GM10248 (cell line): ENCODE measurements at regions of chr12 and their contacts with region 1.

Region 1: DNA sequence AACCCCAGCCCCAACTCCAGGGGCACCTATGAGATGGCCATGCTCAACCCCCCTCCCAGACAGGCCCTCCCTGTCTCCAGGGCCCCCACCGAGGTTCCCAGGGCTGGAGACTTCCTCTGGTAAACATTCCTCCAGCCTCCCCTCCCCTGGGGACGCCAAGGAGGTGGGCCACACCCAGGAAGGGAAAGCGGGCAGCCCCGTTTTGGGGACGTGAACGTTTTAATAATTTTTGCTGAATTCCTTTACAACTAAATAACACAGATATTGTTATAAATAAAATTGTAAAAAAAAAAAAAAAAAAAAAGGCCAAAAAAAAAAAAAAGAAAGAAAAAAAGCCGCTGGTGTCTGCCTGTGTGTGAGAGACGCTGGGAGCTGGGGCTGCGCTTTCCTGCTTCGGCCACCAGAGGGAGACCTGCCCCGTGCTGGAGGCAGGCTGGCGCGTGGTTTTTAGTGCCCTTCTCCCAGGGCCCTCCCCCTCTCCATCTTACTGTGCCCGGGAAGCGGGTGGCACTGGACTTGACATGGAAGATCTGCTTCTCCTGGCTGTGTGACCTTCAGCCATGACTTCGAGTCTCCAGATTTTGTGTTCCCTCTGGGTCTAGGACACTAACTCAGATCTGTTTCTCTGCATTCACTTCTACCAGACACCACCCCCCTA is 3.4 kb upstream of the NXPH4 start:
- DNase-seq: peak; percentile 89
- CTCF ChIP-seq: peak; percentile 97

Region 2: DNA sequence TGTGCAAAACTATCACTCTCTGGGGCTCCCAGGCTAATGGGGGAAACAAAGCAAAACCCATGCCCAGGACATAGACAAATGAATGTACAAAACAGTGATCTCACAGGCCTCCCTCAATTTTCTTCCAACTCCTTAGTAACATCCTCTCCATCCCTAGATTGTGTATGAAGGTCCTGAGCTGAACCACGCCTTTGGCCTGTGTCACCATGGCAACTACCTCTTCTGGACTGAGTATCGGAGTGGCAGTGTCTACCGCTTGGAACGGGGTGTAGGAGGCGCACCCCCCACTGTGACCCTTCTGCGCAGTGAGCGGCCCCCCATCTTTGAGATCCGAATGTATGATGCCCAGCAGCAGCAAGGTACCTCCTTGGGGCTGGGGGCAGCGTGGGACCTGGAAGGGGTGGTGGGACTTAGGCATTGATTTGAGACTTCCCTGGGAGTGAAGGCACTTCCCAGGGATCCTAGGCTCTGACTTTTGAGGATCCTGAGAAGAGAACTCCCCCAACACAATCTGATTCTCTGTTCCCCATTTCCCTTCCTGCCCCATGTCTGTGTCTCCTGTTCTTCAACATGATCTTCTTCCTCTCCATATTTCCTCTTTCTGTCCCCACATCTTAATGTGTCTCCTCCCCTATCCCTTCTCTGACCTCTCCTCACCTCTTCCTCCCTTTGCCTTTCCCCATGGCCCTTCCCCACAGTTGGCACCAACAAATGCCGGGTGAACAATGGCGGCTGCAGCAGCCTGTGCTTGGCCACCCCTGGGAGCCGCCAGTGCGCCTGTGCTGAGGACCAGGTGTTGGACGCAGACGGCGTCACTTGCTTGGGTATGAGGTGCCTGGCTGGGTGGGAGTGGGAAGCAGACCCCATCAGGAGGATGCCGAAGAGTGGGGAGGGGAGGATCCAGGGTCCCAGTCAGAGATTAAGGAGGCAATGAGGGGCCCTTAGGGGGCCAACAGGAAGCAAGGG is 50.7 kb before region 1 on chr12:
- CTCF ChIA-PET with region 1: no interaction called
- POLR2A ChIA-PET with region 1: no interaction called
- DNase-seq: no peak
- CTCF ChIP-seq: no peak

Region 3: DNA sequence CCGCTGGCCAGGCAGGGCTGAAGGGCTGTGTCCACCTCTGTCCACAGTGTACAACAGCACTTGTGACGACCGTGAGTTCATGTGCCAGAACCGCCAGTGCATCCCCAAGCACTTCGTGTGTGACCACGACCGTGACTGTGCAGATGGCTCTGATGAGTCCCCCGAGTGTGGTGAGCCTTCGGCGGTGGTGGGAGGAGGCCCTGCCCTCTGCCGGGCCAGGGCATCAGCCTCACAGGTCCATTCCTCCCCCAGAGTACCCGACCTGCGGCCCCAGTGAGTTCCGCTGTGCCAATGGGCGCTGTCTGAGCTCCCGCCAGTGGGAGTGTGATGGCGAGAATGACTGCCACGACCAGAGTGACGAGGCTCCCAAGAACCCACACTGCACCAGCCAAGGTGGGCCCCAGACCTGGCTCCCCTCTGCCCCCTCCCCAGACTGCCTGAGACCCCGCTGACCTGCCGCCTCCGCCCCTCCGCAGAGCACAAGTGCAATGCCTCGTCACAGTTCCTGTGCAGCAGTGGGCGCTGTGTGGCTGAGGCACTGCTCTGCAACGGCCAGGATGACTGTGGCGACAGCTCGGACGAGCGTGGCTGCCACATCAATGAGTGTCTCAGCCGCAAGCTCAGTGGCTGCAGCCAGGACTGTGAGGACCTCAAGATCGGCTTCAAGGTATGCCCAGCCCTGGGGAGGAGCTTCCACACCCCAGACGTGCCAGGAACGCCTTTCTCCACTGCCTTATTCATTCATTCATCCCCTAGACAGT is 17.4 kb before region 1 on chr12:
- CTCF ChIA-PET with region 1: interaction called, 11 read pairs
- POLR2A ChIA-PET with region 1: no interaction called
- DNase-seq: no peak
- CTCF ChIP-seq: no peak

Region 4: DNA sequence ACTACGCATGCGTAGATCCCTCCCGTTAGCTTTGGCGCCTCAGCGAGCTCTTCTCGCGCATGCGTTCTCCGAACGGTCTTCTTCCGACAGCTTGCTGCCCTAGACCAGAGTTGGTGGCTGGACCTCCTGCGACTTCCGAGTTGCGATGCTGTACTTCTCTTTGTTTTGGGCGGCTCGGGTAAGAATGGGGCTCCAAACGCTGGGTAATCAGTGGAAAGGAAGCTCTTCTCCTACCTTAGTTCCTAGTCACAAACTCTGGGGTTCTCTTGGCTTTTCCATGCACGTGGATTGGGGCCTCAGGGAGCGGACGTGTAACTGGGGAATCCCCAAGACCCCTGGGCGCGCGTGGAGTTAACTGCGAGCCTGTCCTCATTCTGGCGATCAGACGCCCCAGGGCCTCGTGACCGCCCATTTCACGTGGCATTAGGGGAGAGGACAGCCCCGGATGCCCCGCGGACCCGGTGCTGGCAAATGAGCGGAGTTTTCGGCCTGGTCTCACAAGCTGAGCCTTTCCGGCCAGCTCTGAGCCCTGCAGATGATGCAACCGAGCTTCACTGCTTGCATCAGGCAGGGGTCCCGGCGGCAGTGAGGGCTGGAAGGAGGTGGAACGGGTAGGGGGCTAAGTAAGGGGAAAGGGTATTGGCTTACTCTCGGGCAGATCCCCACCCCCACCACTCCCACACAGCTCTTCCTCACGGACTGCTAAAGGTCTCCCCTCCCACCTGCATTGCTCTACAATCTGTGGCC is 16.6 kb after region 1 on chr12 and contains the start of gene SHMT2:
- CTCF ChIA-PET with region 1: interaction called, 403 read pairs
- POLR2A ChIA-PET with region 1: interaction called, 6 read pairs
- DNase-seq: peak; percentile 98
- CTCF ChIP-seq: no peak

Region 5: DNA sequence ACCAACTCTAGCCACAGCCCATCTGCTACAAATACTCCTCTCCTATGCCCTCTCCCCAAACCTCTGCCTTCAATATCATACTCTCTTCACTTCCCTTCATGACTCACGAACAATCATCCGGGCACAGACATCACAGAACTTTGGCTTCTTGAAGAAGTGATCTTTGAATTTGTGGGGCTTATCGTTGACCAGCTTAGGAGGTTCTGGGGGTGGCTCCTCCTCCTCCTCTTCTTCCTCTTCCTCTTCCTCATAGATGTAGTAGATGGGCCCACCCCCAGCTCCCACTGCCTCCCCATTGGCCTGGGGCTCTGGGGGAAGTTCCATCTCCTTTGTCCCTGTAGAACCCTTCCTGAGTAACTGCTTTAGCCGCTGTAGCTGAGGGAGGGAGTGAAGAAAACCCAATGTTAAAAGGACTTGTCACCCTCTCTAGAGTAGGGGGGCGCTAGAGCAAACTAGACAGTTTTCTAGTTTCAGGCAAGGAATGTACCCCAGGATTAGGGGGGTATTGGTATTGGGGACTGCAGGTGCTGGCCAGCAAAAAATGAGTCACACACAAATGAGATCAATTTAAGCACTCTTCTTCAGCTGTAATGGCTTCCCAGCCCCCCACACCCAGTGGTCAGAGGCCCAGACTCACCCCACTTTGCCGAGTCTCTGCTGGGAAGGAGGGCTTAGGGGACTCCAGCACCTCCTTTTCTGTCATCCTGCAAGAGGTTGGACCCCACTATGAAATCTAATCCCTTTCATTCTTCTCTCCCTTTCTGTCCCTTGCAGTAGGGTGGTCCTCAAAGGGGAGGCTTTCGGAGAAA is 36.0 kb after region 1 on chr12:
- CTCF ChIA-PET with region 1: interaction called, 403 read pairs
- POLR2A ChIA-PET with region 1: no interaction called
- DNase-seq: peak; percentile 53
- CTCF ChIP-seq: no peak